Esophagus muscularis mucosa (tissue), 4 donors: ENCODE measurements at regions of chr15 and their contacts with region 1.

Region 1: GRCh38 chr15:74307827-74308644 is 59.4 kb downstream of the CYP11A1 start:
- DNase-seq: no peak
- H3K4me3 ChIP-seq: no peak overlapping the region
- H3K27ac ChIP-seq: no peak overlapping the region
- H3K4me1 ChIP-seq: no peaks in the 10 kb centered on the region
- H3K27me3 ChIP-seq: peaks cover 0 to 83% (median 5%) of the 10 kb centered on the region in 4 donors
- CTCF ChIP-seq: peak; percentile 57 to 69 (median 68)
- EP300 ChIP-seq: no peak
- POLR2A ChIP-seq: no peak

Region 2: DNA sequence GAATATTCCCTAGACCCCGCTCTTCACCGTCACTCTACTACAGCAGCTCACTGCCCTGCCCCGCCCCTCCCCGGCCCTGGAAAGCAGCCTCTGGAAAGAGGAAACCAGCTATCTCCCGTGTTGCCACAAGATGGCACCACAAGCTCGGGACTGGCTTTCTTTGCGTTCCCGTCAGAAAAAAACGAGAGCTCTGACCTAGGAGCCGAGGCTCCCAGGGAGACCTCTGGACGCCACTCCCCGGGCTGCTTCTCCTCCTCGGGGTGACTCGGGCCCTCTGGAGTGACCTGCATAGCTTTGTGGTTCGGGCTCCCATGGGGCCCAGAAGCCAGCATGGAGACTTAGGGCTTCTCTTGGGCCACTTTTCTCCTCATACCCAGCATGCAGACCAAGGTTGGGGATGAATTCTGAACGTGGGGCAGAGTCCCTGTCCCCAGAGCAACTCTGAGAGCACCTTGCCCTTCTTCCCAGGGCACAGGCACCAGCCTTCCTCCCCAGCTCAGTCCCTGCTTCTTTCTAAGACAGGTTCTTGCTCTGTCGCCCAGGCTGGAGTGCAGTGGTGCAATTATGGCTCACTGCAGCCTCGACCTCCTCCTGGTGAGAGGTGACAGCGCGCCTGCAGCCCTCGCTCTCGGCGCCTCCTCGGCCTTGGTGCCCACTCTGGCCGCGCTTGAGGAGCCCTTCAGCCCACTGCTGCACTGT is 334.9 kb before region 1 on chr15:
- intact Hi-C with region 1: loop called (anchors 10 kb)
- DNase-seq: peak; percentile 95
- H3K4me3 ChIP-seq: peak overlapping the region; percentile 28 to 46 (median 36)
- H3K27ac ChIP-seq: no peak overlapping the region
- H3K4me1 ChIP-seq: peaks cover 4 to 12% (median 11%) of the 10 kb centered on the region in 4 donors
- H3K27me3 ChIP-seq: peaks cover 0 to 16% (median 0%) of the 10 kb centered on the region in 4 donors
- CTCF ChIP-seq: peak; percentile 81 to 95 (median 91)
- EP300 ChIP-seq: no peak
- POLR2A ChIP-seq: no peak